ENCODE measurements at regions of chr13 and their contacts with region 1.

Region 1: DNA sequence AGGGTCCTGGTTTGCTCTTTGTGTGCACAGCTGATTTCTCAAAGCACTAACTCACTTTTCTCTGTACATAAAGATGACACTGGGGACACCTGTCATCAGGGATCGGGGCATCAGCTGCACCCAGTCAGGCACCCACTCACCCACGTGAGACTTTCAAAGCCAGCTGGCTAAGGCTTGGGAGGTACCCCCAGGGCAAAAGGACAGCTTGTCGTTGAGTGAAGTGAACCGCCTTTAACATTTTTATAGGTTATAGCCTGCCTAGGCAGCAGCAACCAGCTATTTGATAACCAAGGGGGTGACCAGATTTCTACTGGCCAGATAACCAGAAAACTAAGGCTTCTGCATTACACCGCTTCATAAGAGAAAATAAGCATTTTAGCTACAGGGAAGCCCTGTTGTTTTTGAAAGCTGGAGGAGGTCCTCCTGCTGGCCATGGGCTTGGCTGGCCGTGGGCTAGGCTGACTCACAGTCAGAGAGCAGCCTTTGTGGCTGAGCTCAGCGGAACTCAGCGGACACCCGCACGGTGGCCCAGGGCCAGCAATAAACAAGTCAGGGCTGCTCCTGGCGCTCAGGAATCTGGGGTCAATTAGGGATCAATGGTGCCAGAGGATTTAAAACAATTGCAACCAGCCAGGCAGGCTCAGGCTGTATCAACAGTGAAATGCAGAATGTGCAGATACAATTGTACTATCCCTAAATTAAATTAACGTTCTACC is 57.1 kb downstream of the ALOX5AP start:
- DNase-seq: peak; percentile 88
- ATAC-seq: peak; percentile 93

Region 2: DNA sequence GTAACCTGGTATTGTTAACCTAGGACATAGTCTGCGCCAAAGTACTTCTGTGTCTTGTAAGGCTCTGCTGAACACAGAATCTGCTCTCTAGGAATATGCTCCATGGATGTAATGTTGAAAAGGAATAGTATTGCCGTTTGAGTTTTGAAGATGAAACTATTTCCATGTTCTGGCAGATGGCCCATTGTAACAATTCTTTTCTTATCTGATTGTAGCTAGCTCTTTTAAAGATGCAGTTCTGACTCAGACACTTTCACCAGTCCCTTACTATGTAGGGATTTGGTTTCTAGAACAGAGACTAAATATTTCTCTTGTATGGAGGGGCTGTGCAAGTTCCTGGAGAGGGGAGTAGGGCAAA is 1786.7 kb before region 1 on chr13:
- intact Hi-C with region 1: no loop called
- DNase-seq: no peak
- ATAC-seq: no peak

Region 3: DNA sequence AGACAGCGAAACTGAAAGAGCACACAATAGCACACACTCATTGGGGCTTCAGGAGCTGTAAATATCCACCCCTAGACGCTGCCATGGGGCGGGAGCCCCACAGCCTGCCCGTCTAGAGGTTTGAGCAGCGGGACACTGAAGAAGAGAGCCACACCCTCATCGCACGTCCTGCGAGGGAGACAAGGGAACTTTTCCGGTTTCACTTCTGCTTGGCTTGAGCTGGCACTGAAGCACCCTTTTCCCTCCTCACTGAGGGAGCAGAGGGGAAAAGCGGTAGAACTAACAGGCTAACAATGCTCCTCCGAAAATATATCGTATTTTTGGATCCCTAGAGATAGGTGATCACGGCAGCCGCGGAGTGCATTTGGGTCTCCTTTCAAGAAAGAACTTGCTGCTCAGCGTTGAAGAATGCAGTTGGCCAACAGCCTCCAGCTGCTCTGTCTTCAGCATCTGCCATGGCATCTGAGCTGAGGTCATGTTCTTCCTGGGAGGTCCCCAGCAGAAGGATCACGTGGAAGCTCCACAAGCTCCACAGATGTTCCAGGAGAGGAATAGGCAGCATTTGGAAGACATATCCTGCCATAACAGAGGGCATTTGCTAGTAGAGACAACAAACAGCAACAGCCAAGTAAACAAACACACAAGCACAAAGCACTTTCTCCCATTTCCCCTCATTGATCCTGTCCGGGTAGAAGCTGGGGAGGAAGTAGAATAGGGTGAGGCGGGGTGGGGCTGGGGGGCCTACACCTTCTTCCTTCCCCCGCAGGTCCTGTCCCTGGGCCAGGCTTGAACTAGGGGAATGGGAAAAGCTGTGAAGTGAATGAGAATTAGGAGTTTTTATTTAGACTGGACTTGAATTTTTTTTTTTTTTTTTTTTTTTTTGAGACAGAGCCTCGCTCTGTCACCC is 101.9 kb before region 1 on chr13:
- intact Hi-C with region 1: loop called (anchors 10 kb)
- DNase-seq: peak; percentile 80
- ATAC-seq: peak; percentile 98

Measured in sciatic nerve (tissue), 2 donors.